Common myeloid progenitor, CD34-positive (primary cell): ENCODE measurements at regions of chr15 and their contacts with region 1.

Region 1: GRCh38 chr15:68672781-68673205 is 94.0 kb downstream of the CORO2B start:
- DNase-seq: peak in 2 of 3 donors; percentile 16 to 40
- H3K4me3 ChIP-seq: no peak overlapping the region
- H3K27ac ChIP-seq: no peak overlapping the region
- H3K4me1 ChIP-seq: peaks cover 8 to 25% (median 23%) of the 10 kb centered on the region in 4 experiments
- H3K27me3 ChIP-seq: no peaks in the 10 kb centered on the region

Region 2: GRCh38 chr15:68431792-68432401 is 240.9 kb before region 1 on chr15 and contains the start of gene ITGA11:
- CTCF ChIA-PET with region 1: no interaction called
- POLR2A ChIA-PET with region 1: no interaction called
- DNase-seq: peak in 2 of 3 donors; percentile 30 to 36
- H3K4me3 ChIP-seq: peak within 1 kb of the TSS in 6 of 7 experiments; percentile 30 to 65 (median 52)
- H3K27ac ChIP-seq: no peak within 1 kb of the TSS
- H3K4me1 ChIP-seq: peaks cover 0 to 22% (median 17%) of the 10 kb centered on the region in 4 experiments
- H3K27me3 ChIP-seq: peaks cover 3 to 78% (median 46%) of the 10 kb centered on the region in 5 experiments

Region 3: GRCh38 chr15:68550481-68551295 is 122.1 kb before region 1 on chr15:
- CTCF ChIA-PET with region 1: interaction called, 141 read pairs
- POLR2A ChIA-PET with region 1: no interaction called
- DNase-seq: peak; percentile 59 to 76 (median 66)
- H3K4me3 ChIP-seq: no peak overlapping the region
- H3K27ac ChIP-seq: no peak overlapping the region
- H3K4me1 ChIP-seq: no peaks in the 10 kb centered on the region
- H3K27me3 ChIP-seq: peaks cover 0 to 9% (median 0%) of the 10 kb centered on the region in 5 experiments

Region 4: GRCh38 chr15:68559345-68560310 is 113.2 kb before region 1 on chr15:
- CTCF ChIA-PET with region 1: interaction called, 141 read pairs
- POLR2A ChIA-PET with region 1: interaction called, 4 read pairs
- DNase-seq: peak; percentile 78 to 88 (median 86)
- H3K4me3 ChIP-seq: peak overlapping the region in 6 of 7 experiments; percentile 54 to 74 (median 66)
- H3K27ac ChIP-seq: no peak overlapping the region
- H3K4me1 ChIP-seq: peaks cover 0 to 16% (median 14%) of the 10 kb centered on the region in 4 experiments
- H3K27me3 ChIP-seq: peaks cover 0 to 23% (median 10%) of the 10 kb centered on the region in 5 experiments

Region 5: DNA sequence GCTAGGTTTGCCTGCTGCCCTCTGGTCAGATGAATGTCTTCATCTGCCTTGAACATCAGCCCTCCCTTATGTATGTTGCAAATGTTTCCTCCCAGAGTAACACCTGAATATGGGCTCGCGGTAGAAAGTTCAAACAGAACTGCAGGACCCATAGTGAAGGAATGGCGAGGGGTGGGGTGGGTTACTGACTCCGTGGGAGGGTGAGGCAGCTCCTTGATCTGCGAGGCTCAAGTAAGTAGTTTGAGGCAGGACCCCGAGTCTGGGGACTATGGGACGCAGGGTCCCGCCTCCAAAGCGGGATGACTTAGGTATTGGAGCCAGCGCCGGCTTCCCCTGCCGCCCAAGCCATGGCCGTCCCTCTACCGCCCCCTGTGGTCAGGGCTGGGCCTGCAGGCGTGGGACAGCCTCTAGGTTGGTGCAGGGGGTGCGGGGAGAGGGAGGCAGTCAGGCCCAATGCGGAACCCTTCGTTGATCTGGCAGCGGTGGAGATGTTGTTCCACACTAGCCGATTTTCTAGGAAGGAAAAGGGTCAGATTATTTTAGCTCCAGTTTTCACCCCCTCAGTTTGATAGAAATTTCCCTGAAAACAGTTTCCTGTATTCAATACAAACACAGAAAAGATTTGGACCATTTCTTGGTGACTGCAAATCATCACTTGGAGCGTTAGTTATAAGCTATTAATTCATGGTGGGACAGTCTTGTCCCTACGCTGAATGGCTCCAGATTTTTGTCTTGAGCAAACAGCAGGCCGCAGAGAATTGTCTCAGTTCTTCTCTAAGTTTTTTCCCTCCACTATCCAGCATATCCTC is 21.7 kb before region 1 on chr15:
- CTCF ChIA-PET with region 1: interaction called, 11 read pairs
- POLR2A ChIA-PET with region 1: interaction called, 3 read pairs
- DNase-seq: peak; percentile 43 to 64 (median 55)
- H3K4me3 ChIP-seq: no peak overlapping the region
- H3K27ac ChIP-seq: no peak overlapping the region
- H3K4me1 ChIP-seq: peaks cover 0 to 13% (median 8%) of the 10 kb centered on the region in 4 experiments
- H3K27me3 ChIP-seq: no peaks in the 10 kb centered on the region

Region 6: DNA sequence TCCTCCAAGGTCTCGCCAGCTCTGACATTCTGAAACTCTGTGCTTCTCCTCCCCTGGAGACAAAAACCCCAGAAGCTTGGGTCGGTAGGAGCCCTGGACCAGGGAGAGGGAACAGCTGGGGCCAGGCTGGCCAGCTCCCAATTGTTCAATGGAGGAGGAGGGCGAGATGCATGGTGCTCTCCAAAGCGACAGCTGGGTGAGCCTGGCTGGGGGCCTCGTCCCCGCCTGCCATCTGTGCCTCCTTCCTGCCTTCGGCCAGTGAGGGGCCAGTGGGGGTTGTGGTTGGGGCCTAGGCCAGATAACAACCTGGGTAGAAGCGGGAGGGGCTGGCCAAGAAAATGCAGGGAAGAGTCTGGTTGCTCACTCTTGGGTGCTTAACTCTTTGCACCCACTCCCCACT is 14.6 kb before region 1 on chr15:
- CTCF ChIA-PET with region 1: interaction called, 27 read pairs
- POLR2A ChIA-PET with region 1: no interaction called
- DNase-seq: peak in 2 of 3 donors; percentile 61 to 75
- H3K4me3 ChIP-seq: peak overlapping the region in 1 of 7 experiments; percentile 34
- H3K27ac ChIP-seq: no peak overlapping the region
- H3K4me1 ChIP-seq: peaks cover 3 to 23% (median 19%) of the 10 kb centered on the region in 4 experiments
- H3K27me3 ChIP-seq: no peaks in the 10 kb centered on the region